Ovary (tissue), 10 donors: ENCODE measurements at regions of chr15 and their contacts with region 1.

Region 1: DNA sequence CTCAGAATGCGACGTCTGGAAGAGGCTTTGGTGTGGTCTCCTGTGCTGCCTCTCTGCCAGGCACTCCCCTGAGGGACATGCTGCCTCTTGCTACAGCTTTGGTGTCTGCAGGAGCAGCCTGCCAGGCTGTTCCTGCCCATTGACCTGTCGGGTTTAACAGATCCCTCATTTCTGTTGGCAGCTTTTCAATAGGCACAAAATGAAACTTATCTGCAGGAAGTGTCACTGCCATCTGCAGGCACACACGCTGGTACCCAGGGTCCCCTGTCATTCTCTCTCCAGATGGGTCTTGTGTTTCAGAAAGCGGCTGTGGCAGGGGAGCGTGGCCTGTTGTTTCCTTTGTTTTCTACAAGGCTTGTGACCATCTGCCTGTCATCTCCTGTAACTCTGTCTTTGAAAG is 328.3 kb upstream of the CHRM5 start:
- DNase-seq: no peak
- H3K4me3 ChIP-seq: no peak overlapping the region
- H3K27ac ChIP-seq: no peak overlapping the region
- H3K4me1 ChIP-seq: no peaks in the 10 kb centered on the region
- H3K27me3 ChIP-seq: no peaks in the 10 kb centered on the region
- CTCF ChIP-seq: no peak
- EP300 ChIP-seq: no peak
- POLR2A ChIP-seq: no peak

Region 2: DNA sequence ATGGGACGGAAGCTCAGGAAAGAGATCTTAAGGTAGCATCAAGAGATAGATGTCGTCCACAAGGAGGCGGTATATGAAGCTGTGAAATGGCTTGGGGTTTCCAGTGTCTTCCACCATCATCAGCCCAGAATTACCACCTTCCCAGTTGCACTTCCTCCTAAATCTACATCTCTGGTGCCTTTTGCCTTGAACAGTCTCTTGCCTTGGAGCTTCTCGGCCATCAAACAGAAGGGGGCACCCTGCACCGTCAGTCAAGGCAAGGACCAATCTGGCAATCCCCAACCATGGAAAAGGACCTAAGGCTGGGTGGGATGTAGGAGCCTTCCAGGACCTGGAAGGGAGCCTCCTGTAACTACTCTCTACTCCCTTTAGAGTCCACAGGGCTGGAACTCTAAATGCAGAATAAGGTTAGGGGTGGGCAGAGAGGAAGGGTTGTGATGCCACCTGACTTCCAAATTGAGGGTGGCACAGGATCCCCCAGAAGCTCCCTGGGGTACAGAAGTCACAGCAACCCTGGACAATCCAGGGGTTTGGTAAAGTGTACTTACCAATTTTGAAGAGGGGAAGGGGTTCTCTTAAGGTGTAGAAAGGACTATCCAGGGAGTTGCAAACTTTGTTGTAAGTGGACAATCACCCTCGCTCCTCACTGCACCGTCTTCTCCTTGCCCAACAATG is 330.2 kb before region 1 on chr15:
- intact Hi-C with region 1: no loop called
- DNase-seq: no peak
- H3K4me3 ChIP-seq: no peak overlapping the region
- H3K27ac ChIP-seq: no peak overlapping the region
- H3K4me1 ChIP-seq: peaks cover 5% of the 10 kb centered on the region
- H3K27me3 ChIP-seq: no peaks in the 10 kb centered on the region
- CTCF ChIP-seq: no peak
- EP300 ChIP-seq: no peak
- POLR2A ChIP-seq: no peak

Region 3: DNA sequence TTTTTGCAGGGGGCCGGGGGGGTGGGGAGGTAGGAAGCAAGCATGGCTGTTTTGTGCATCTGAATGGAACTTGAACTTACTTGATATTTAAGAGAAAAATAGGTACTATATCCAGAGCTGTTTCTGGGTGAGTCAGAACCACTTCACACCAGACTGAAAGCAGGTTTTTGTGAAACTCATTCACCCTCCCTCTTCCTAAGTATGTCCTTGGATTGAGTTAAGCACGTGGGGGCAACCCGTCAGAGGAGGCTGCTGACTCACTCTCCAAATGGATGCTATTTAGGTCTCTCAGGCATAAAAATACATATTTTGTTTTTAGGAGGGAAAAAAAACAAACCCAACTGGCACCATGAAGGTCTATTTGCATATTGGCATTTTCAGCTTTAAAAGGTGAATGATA is 58.9 kb before region 1 on chr15:
- intact Hi-C with region 1: loop called in 1 of 4 experiments (anchors 10 kb)
- DNase-seq: peak; percentile 51 to 79 (median 63)
- H3K4me3 ChIP-seq: no peak overlapping the region
- H3K27ac ChIP-seq: peak overlapping the region; percentile 13 to 82
- H3K4me1 ChIP-seq: peaks cover 16% of the 10 kb centered on the region
- H3K27me3 ChIP-seq: no peaks in the 10 kb centered on the region
- CTCF ChIP-seq: no peak
- EP300 ChIP-seq: no peak
- POLR2A ChIP-seq: no peak